Activated CD8-positive, alpha-beta T cell treated with anti-CD3 and anti-CD28 coated beads, Interleukin-2, amount 10 ng/mL, durations not matched to agents 7 days and 5 days (primary cell): ENCODE measurements at regions of chr1 and their contacts with region 1.

Region 1: GRCh38 chr1:235971571-235972310 is 93.1 kb downstream of the NID1 start:
- DNase-seq: peak; percentile 94
- ATAC-seq: peak; percentile 99
- H3K4me3 Mint-ChIP-seq: peak overlapping the region; percentile 75
- H3K27ac Mint-ChIP-seq: peak overlapping the region; percentile 91
- H3K4me1 Mint-ChIP-seq: peaks cover 22% of the 10 kb centered on the region
- H3K27me3 Mint-ChIP-seq: peaks cover 2% of the 10 kb centered on the region

Region 2: DNA sequence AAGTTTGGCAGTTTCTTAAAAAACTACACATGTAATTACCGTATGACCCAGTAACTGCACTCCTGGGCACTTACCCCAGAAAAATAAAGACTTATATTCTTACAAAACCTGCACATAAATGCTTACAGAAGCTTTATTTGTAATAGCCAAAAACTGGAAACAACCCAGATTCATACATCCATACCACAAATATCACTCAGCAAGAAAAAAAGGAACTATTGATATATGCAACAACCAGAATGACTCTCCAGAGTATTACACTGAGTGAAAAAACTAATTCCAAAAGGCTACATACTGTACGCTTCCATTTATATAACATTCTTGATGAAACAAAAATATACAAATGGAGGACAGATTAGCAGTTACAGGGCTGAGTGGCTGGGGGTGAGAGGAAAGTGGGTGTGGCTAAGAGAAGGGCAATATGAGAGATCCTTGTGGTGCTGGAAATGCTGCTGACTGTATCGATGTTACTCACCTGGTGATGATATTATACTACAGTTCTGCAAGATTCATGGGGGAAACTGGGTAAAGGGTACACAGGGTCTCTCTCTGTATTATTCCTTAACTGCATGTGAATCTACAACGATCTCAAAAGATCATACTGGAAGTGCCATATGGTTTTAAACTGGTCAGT is 226.1 kb before region 1 on chr1:
- CTCF ChIA-PET with region 1: interaction called, 11 read pairs
- POLR2A ChIA-PET with region 1: interaction called, 4 read pairs
- DNase-seq: no peak
- ATAC-seq: no peak
- H3K4me3 Mint-ChIP-seq: no peak overlapping the region
- H3K27ac Mint-ChIP-seq: no peak overlapping the region
- H3K4me1 Mint-ChIP-seq: no peaks in the 10 kb centered on the region
- H3K27me3 Mint-ChIP-seq: no peaks in the 10 kb centered on the region

Region 3: GRCh38 chr1:235831148-235831547 is 140.6 kb before region 1 on chr1:
- CTCF ChIA-PET with region 1: interaction called, 49 read pairs
- POLR2A ChIA-PET with region 1: no interaction called
- DNase-seq: no peak
- ATAC-seq: no peak
- H3K4me3 Mint-ChIP-seq: no peak overlapping the region
- H3K27ac Mint-ChIP-seq: no peak overlapping the region
- H3K4me1 Mint-ChIP-seq: peaks cover 2% of the 10 kb centered on the region
- H3K27me3 Mint-ChIP-seq: no peaks in the 10 kb centered on the region

Region 4: GRCh38 chr1:235878082-235878811 is 93.5 kb before region 1 on chr1:
- CTCF ChIA-PET with region 1: interaction called, 16 read pairs
- POLR2A ChIA-PET with region 1: interaction called, 6 read pairs
- DNase-seq: no peak
- ATAC-seq: no peak
- H3K4me3 Mint-ChIP-seq: no peak overlapping the region
- H3K27ac Mint-ChIP-seq: no peak overlapping the region
- H3K4me1 Mint-ChIP-seq: peaks cover 48% of the 10 kb centered on the region
- H3K27me3 Mint-ChIP-seq: no peaks in the 10 kb centered on the region

Region 5: DNA sequence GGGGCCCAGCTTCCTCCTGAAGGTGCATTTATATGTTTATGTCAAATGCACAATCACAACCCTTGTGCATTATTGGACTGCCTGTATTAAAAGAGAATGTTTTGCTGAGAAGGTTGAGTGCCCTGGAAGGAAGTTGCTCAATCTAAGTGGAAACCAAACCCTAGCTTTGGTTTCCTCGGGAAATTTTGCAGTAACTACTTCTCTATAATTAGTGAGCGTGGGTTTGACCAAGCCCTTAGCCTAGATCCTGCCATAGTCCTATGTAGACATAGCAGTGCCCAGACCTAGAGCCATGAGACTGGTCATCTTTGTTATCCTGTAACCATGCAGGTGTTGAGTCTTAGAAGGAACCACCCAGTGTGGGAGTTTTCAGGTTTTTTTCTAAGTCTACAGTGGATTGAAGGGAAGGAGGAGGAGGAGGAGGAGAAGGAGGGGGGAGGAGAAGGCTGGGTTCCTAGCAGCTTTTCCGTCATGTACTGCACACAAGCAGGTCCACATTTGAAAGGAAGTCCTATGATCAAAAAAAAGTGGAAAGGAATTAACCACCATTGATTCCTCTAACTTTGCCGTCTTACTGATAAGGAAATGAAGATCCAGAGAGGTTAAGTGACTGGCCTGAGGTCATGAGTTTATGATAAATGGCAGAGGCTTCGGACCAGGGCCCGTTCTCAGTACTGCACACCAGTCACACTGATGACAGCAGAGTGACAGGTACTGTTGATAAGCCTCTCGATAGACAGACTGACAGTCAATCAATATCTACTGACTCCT is 32.8 kb before region 1 on chr1:
- CTCF ChIA-PET with region 1: interaction called, 10 read pairs
- POLR2A ChIA-PET with region 1: no interaction called
- DNase-seq: no peak
- ATAC-seq: peak; percentile 31
- H3K4me3 Mint-ChIP-seq: peak overlapping the region; percentile 41
- H3K27ac Mint-ChIP-seq: peak overlapping the region; percentile 79
- H3K4me1 Mint-ChIP-seq: peaks cover 42% of the 10 kb centered on the region
- H3K27me3 Mint-ChIP-seq: peaks cover 3% of the 10 kb centered on the region

Region 6: GRCh38 chr1:235984041-235984825 is 12.5 kb after region 1 on chr1:
- CTCF ChIA-PET with region 1: interaction called, 21 read pairs
- POLR2A ChIA-PET with region 1: no interaction called
- DNase-seq: no peak
- ATAC-seq: no peak
- H3K4me3 Mint-ChIP-seq: no peak overlapping the region
- H3K27ac Mint-ChIP-seq: no peak overlapping the region
- H3K4me1 Mint-ChIP-seq: no peaks in the 10 kb centered on the region
- H3K27me3 Mint-ChIP-seq: peaks cover 26% of the 10 kb centered on the region

Region 7: DNA sequence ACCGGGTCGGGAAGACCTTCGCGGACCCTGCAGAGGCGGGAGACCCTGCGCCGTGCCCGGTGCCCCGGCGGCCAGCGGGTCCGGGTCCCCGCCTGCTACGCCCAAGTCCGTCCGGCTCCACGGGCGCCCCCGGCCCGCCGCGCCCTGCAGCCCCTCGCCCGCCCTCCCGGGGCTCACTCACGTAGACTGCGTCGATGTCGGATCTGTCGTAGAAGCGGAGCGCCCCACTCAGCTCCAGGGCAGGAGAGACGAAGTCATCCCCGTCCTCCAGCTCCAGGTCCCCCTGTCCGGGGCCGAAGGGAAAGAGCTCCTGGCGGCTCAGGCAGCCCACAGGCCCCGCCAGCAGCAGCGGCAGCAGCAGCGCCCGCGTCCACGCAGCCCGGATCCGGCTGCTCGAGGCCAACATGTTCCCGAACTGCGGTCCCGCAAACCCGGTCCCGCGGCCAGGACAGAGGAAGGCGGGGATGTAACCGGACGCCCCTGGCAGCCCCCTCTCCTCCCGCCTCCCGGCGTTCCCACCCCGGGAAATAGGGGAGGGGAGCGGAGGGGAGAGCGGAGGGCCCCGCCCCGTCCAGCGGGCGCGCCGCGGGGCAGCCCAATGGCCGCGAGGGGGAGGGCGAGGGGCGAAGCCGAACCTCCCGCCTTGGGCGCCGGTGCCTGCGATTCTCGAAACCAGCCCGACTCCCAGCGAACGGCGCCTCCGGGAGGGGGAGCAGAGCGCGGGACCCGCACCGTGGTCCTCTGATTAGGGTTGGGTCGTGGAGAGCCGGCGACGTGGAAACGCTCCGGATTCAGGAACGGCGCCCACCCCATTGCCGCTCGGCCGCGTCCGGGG is 93.2 kb after region 1 on chr1 and contains the start of gene NID1:
- CTCF ChIA-PET with region 1: interaction called, 22 read pairs
- POLR2A ChIA-PET with region 1: no interaction called
- DNase-seq: peak; percentile 23
- ATAC-seq: peak; percentile 58
- H3K4me3 Mint-ChIP-seq: peak within 1 kb of the TSS; percentile 42
- H3K27ac Mint-ChIP-seq: no peak within 1 kb of the TSS
- H3K4me1 Mint-ChIP-seq: peaks cover 24% of the 10 kb centered on the region
- H3K27me3 Mint-ChIP-seq: peaks cover 46% of the 10 kb centered on the region
- total RNA-seq, gene NID1: 0.05 TPM in 1 of 2 experiments, not detected in the other

Region 8: DNA sequence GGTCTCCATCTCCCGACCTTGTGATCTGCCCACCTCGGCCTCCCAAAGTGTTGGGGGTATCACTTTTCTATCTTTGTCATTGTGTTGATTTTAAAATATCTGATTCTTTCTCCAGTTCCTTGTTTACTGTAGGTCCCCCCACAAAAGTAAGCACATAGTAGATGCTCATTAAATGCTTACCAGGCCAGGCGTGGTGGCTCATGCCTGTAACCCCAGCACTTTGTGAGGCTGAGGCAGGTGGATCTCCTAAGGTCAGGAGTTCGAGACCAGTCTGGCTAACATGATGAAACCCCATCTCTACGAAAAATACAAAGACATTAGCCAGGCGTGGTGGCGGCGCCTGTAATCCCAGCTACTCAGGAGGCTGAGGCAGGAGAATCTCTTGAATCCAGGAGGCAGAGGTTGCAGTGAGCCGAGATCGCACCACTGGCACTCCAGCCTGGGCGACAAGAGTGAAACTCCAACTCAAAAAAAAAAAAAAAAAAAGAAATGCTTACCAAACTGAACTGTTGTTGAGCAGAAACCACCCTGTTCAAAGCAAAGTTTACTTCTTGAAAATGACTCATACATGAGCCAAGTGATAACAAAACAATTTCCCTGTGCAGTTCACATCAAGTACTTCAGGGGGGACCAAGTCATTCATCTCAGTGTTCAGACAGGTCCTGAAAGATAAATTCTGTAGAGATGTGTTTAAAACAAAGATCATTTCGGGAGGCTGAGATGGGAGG is 117.5 kb after region 1 on chr1:
- CTCF ChIA-PET with region 1: no interaction called
- POLR2A ChIA-PET with region 1: no interaction called
- DNase-seq: no peak
- ATAC-seq: no peak
- H3K4me3 Mint-ChIP-seq: no peak overlapping the region
- H3K27ac Mint-ChIP-seq: no peak overlapping the region
- H3K4me1 Mint-ChIP-seq: peaks cover 3% of the 10 kb centered on the region
- H3K27me3 Mint-ChIP-seq: peaks cover 11% of the 10 kb centered on the region